Activated CD4-positive, alpha-beta memory T cell treated with anti-CD3 and anti-CD28 coated beads for 36 hours (primary cell): ENCODE measurements at regions of chr10 and their contacts with region 1.

Region 1: GRCh38 chr10:105691811-105692210 is 1050.7 kb downstream of the SORCS3 start:
- DNase-seq: no peak
- H3K4me3 Mint-ChIP-seq: no peak overlapping the region
- H3K27ac Mint-ChIP-seq: no peak overlapping the region
- H3K4me1 Mint-ChIP-seq: no peaks in the 10 kb centered on the region
- H3K27me3 Mint-ChIP-seq: no peaks in the 10 kb centered on the region

Region 2: DNA sequence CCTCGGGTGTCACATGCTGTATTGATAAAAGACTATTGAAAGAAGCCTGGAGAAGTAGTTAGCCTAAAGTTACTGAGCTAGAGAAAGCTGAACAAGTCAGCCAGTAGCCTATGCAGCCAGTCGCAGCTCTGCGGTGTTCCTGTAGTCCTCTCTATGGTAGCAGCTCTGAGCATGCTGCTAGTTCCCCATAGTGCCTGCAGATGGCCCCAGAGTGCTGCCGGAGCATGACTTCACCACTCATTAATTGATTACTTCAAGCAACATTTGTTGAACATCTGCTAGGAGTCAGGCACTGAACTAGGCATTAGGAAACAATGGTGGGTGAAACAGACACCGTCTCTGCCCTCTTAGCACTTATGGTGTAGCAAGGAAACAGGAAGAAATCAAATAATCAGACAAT is 628.0 kb before region 1 on chr10:
- CTCF ChIA-PET with region 1: no interaction called
- POLR2A ChIA-PET with region 1: no interaction called
- intact Hi-C with region 1: loop called (anchors 5 kb)
- DNase-seq: peak; percentile 38
- H3K4me3 Mint-ChIP-seq: no peak overlapping the region
- H3K27ac Mint-ChIP-seq: no peak overlapping the region
- H3K4me1 Mint-ChIP-seq: no peaks in the 10 kb centered on the region
- H3K27me3 Mint-ChIP-seq: no peaks in the 10 kb centered on the region

Region 3: DNA sequence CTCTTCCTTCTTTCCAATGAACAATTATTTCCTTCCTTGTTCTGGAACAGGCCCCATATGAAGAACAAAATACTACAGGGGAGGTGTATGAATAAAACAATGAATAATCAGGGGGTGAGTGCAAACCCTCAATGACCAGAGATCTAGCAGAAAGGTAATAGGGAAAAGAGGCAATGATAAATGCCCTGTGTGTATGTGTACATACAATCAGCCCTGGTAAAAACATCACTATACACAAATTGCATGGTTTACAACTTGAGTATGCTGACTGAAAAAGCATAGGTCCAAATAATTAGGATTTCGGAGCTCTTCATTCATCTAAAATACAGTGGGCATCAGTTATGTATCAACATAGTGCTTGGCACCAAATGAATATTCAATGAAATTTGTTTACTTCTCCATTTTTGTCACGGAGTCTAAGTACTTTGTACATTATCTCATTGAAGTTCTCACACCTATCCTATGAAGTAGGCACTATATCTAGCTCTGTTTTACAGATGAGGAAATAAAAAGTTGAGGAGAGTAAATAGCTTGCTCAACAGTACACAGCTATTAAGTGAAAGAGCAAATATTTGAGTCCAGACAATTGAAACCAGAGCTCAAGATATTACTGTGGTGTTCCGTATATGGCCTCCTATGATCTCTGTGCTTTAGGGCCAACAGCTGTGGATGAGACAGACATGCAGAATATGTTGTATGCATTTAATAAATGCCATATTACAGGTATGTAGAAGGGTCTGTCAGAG is 14.6 kb after region 1 on chr10:
- CTCF ChIA-PET with region 1: no interaction called
- POLR2A ChIA-PET with region 1: no interaction called
- intact Hi-C with region 1: no loop called
- DNase-seq: no peak
- H3K4me3 Mint-ChIP-seq: no peak overlapping the region
- H3K27ac Mint-ChIP-seq: no peak overlapping the region
- H3K4me1 Mint-ChIP-seq: no peaks in the 10 kb centered on the region
- H3K27me3 Mint-ChIP-seq: no peaks in the 10 kb centered on the region